ENCODE measurements at regions of chr14 and their contacts with region 1.

Region 1: GRCh38 chr14:37594238-37594914 is 673 bp downstream of the FOXA1 start:
- DNase-seq: no peak
- H3K4me3 ChIP-seq: peak overlapping the region; percentile 56 to 57
- H3K27ac ChIP-seq: no peak overlapping the region
- H3K4me1 ChIP-seq: peaks cover 0 to 13% of the 10 kb centered on the region in 2 donors
- H3K27me3 ChIP-seq: peaks cover 58% of the 10 kb centered on the region
- CTCF ChIP-seq: peak; percentile 20 to 51 (median 32)

Region 2: GRCh38 chr14:36520601-36521525 is 1073.5 kb before region 1 on chr14:
- intact Hi-C with region 1: loop called (anchors 10 kb)
- DNase-seq: no peak
- H3K4me3 ChIP-seq: peak overlapping the region; percentile 48 to 52
- H3K27ac ChIP-seq: no peak overlapping the region
- H3K4me1 ChIP-seq: peaks cover 6 to 32% of the 10 kb centered on the region in 2 donors
- H3K27me3 ChIP-seq: peaks cover 54% of the 10 kb centered on the region
- CTCF ChIP-seq: peak in 2 of 3 experiments; percentile 6 to 13

Region 3: DNA sequence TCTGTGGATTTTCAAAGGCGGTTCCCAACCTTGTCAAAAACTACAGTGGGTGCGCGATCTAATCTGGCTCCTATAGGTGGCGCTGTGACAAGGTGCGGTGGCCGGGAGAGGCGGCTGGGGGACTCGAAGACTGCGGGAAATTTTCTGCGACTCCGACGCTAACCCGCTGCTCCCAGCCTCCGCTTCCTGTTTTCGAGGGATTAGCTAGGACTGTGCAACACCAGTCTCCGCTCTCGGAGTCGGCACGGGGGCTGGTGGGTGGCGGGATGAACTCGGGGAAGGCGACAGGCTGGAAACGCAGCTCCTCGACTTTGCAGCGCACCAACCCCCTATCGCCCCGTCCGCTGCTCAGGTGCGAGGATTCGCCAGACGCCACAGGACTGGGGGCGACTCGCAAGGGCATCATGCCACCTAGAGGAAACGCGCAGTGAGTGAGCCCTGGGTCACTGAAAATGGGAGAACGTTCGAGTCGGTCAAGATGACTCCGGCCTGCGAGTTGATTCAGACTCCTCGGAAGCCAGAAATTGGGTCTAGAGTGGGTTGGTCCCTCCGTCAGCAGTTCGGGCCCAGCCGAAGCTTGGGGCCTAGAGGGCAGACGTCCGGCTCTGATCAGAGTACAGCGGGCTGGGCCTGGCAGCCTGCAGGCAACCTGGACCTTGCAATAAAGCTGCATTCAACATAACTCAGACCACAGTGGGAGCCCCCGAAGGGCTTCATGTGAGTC is 938.3 kb before region 1 on chr14:
- intact Hi-C with region 1: loop called (anchors 10 kb)
- DNase-seq: no peak
- H3K4me3 ChIP-seq: peak overlapping the region in 1 of 2 donors; percentile 42
- H3K27ac ChIP-seq: no peak overlapping the region
- H3K4me1 ChIP-seq: peaks cover 0 to 6% of the 10 kb centered on the region in 2 donors
- H3K27me3 ChIP-seq: peaks cover 49% of the 10 kb centered on the region
- CTCF ChIP-seq: peak in 1 of 3 experiments; percentile 49

Region 4: DNA sequence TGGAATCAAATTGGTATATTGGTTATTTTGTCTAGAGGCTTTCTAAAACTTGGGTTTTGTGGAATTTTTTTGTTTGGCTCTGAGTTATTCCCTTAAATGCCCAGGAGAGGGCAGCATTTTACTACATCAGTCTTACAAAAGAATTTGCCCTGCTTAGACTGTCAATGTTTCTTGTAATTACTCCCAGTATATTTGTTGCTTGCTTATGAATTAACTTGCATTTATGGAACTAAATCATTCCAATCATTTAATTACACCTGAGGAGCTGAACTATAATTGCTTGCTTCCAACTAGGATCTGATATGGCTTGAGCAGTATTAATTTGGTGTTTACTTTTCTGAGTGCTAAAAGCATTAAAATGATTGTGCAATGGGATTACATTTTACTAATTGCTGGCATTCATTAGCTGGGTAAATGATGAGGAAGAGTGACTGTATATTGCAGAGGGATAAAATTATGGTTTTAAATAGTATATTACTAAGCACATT is 347.9 kb before region 1 on chr14:
- intact Hi-C with region 1: loop called (anchors 10 kb)
- DNase-seq: no peak
- H3K4me3 ChIP-seq: no peak overlapping the region
- H3K27ac ChIP-seq: no peak overlapping the region
- H3K4me1 ChIP-seq: no peaks in the 10 kb centered on the region
- H3K27me3 ChIP-seq: no peaks in the 10 kb centered on the region
- CTCF ChIP-seq: peak; percentile 36 to 72 (median 62)

Region 5: DNA sequence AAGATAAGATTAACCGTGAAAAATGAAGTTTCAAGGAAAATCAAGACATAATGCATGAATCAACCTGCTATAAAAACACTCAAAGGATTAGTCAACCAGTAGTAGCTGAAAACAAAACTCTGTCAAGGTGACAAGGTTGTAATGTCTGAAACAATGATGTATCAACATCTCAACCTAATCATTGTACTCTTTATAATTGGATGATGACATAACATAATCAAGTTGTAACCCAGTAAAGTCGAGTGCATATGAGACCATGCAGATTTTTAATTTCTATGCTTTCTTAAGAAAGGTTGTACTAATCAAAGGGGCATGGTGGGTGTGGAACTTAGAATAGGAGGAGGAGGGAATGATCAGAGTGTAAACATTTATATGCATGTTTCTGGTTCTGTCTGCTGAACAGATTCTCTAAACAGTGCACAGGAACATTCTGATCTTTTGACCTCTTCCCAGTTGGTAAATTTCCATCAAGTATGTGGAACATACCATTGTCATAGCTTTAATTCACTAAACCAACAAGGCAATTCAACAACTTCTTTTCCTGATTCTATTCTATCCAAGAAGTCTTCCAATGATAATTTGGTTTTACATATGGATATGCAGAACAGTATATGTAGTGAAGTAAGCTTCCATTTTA is 254.7 kb after region 1 on chr14:
- intact Hi-C with region 1: no loop called
- DNase-seq: no peak
- H3K4me3 ChIP-seq: no peak overlapping the region
- H3K27ac ChIP-seq: no peak overlapping the region
- H3K4me1 ChIP-seq: no peaks in the 10 kb centered on the region
- H3K27me3 ChIP-seq: no peaks in the 10 kb centered on the region
- CTCF ChIP-seq: no peak

Measured in ascending aorta (tissue), 2 donors.